Heart right ventricle (tissue), 16 donors: ENCODE measurements at regions of chr18 and their contacts with region 1.

Region 1: DNA sequence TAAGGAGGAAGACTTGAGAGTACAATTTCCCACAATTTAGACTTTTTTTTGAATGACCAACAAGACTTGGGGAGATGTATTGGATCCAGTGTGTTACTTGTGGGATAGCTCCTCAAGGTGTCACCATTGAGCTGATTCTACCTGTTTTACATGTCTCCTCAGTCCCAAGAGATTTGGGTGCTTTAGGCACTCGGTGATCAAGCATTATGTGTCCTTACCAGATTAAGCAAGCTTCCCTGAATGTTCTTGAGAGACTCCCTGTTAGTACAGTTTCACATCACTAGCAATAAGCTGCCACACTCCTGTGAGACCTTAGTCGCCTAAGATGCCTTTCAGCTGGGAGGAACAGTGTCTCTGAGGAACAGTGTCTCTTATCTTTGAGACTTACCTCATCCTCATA is 384.3 kb upstream of the SYT4 start:
- DNase-seq: no peak
- ATAC-seq: peak in 4 of 8 donors; percentile 33 to 71 (median 54)
- H3K4me3 ChIP-seq: no peak overlapping the region
- H3K27ac ChIP-seq: no peak overlapping the region
- H3K4me1 ChIP-seq: peaks cover 0 to 6% (median 0%) of the 10 kb centered on the region in 9 donors
- H3K27me3 ChIP-seq: no peaks in the 10 kb centered on the region
- CTCF ChIP-seq: peak in 7 of 9 donors; percentile 16 to 42 (median 32)

Region 2: GRCh38 chr18:43705850-43706249 is 44.3 kb after region 1 on chr18:
- intact Hi-C with region 1: loop called in 1 of 10 experiments (anchors 2 kb)
- DNase-seq: no peak
- ATAC-seq: no peak
- H3K4me3 ChIP-seq: no peak overlapping the region
- H3K27ac ChIP-seq: no peak overlapping the region
- H3K4me1 ChIP-seq: no peaks in the 10 kb centered on the region
- H3K27me3 ChIP-seq: no peaks in the 10 kb centered on the region
- CTCF ChIP-seq: no peak

Region 3: DNA sequence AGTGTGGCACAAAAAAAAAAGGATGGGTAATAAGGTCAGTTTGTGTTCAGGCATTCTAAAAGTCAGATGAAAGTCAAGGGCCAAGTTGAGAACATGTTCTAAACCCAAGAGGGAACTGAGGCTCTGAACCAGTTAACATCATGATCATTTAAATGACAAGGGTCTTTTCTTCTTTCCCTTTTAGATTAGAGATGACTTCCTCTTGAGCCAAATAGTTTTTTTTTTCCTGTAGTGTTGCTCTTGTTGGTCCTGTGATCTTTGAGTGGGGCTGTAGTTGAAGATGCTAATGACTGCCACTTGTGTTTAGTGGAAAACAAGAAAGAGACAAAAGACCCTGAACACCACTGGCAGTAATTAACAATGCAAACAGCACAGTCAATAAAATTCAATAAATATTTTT is 98.4 kb after region 1 on chr18:
- intact Hi-C with region 1: loop called in 1 of 10 experiments (anchors 10 kb)
- DNase-seq: no peak
- ATAC-seq: no peak
- H3K4me3 ChIP-seq: no peak overlapping the region
- H3K27ac ChIP-seq: no peak overlapping the region
- H3K4me1 ChIP-seq: no peaks in the 10 kb centered on the region
- H3K27me3 ChIP-seq: no peaks in the 10 kb centered on the region
- CTCF ChIP-seq: no peak

Region 4: DNA sequence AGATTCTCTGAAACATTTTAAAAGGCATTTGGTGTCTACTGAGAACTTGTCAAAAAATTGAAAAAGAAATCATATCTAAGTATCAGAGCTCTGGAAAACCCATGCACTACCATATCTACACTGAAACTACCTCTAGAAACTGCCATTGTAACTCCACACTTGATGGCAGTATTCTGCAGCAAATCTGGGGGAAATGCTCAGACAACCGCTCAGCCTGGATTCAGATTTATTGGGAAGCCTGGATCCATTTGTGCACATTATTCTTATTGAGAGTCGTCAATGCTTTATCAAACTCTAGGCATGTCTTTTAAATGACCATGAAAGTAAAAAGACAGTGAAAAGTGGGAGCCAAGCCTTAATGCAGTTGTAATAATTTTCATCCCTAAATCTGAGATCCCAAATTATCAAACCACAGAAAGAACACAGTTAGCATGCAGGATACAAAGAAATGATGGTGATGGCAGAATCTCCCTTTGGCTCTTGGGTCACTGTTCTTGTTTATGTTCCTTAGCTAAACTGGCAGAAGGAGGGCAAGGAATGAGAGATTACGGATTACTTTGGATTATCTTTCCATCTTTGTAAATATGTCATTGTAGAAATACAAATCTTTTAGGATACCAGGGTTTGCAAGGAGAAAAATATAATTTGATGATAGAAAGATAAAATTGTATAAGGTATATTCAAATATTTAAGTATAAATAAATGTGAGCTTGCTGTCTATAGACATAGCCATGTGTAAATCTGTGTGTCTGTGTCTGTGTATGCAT is 127.8 kb after region 1 on chr18:
- intact Hi-C with region 1: loop called in 1 of 10 experiments (anchors 5 kb)
- DNase-seq: peak in 1 of 2 donors; percentile 7
- ATAC-seq: peak in 5 of 8 donors; percentile 42 to 77 (median 55)
- H3K4me3 ChIP-seq: no peak overlapping the region
- H3K27ac ChIP-seq: no peak overlapping the region
- H3K4me1 ChIP-seq: peaks cover 0 to 3% (median 0%) of the 10 kb centered on the region in 9 donors
- H3K27me3 ChIP-seq: no peaks in the 10 kb centered on the region
- CTCF ChIP-seq: peak in 7 of 9 donors; percentile 9 to 65 (median 47)